ENCODE measurements at regions of chr10 and their contacts with region 1.

Region 1: DNA sequence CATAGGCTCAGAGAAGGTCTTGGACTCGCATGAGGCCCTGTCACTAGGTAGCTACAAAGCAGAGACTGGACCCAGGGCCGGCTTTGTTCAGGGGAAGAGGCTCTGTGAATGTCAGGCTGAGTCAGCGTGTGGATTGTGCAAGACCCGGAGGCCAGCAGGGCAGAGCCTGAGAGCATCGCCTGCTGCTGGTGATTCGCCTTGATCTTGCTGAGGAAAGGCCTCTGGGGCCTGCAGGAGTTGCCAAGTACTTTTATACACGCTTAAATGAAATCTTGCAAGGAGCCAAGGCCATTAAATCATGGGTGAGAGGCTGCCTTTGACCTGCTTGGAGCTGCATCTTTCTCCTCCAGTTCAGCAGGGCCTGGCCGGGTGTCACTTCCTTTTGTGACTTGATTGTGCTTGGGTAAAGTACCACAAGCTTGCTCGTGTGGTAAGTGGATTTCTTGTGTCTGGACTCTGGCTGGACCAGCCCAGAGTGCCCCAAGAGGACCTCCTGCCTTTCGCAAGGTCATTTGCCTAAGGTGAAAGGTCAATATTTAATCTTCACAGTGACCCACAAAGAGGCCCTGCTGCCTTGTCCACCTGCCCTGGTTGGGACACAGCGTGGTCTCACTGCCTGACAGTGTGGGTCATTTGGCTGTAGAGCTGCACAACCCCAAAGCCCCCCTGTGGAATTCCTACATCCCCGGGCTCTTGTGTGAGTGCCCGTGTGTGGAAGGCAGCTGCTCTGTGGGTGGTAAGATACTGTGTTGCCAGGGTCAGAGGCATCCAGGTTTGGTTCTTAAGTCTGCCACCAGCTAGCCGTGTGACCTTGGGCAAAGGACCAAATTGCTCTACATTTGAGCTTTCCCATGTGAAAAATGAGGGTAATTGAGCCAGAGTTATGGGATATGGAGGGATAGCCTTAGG is 38.6 kb upstream of the SH2D4B start:
- DNase-seq: peak; percentile 94
- H3K4me3 ChIP-seq: no peak overlapping the region
- H3K27ac ChIP-seq: peak overlapping the region; percentile 73
- H3K4me1 ChIP-seq: peaks cover 89% of the 10 kb centered on the region
- H3K27me3 ChIP-seq: no peaks in the 10 kb centered on the region
- CTCF ChIP-seq: peak in 1 of 2 donors; percentile 35

Region 2: DNA sequence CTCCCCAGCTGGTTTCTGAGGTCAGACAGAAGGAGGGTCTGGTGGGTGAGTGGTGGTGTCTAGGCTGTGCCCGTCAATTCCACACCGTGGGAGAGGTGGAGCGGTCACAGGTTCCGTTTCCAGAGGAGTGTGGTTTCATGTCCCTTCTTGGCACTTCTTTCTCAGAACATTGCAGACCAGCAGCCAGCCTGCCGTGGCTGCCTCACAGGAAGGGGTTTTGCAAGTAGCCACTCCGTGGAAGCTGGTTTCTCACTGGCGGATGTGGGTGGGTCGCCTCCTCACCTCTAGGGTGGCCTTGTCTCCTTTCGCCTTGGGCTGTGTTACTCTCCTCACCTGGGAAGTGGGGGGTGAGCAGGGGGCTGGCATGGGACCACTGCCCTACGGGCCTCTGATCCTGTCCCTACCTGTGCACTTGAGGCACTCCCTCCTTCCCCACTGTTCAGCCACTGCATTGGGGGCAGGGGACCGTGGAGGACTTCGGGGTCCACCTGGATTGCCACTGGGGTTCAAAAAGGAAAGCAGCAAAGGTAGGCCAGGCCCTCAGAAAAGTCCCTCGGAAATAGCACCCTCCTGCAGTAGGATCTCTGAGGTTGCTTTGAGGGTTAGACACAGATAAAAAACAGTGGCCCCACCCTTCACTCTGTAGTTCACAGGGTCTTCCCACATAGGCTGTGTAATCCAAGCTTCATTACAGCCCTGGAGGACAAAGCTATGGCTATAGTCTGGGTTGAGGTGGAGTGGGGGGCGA is 11.1 kb before region 1 on chr10:
- CTCF ChIA-PET with region 1: no interaction called
- dilution Hi-C with region 1: no loop called
- in situ Hi-C with region 1: no loop called
- intact Hi-C with region 1: loop called (anchors 1 kb)
- DNase-seq: no peak
- H3K4me3 ChIP-seq: no peak overlapping the region
- H3K27ac ChIP-seq: peak overlapping the region; percentile 3
- H3K4me1 ChIP-seq: peaks cover 37% of the 10 kb centered on the region
- H3K27me3 ChIP-seq: no peaks in the 10 kb centered on the region
- CTCF ChIP-seq: no peak

Region 3: DNA sequence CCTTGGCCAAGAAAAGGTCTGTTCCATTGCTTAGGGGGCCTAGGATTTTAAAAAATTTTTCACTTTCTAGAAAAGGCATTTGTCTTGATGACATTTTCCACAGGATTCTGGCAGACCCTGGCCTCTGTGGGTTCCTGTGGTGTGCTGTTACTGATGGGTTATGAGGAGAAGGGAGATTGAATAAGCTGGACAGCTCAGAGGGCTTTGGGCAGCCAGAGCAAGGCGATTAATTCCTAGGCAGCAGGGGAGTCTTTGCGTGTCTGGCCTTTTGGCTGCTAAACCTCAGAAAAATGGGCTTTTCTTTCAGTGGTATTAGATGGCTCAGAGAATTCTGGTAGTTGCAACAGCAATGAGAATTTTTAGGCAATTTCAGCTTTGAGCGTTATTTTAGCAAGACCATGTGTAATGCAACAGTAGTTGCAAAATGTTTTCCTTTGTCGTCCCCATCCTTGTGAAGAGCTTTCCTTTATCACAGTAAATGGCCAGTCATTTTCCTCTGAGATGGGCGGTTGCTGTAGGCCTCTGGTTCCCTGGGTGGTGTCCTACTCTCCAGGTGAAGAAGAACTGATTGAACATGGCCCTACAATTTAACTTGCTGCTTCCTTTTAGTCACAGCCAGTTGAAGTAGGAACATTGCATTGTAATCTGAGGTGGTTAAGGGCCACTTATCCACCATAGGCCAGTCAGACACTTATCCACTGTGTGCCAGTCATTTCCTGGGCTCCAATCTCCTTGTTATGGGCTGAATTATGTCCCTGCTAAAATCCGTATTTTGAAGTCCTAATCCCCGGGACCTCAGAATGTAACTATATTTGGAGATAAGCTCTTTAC is 81.8 kb after region 1 on chr10:
- CTCF ChIA-PET with region 1: no interaction called
- dilution Hi-C with region 1: no loop called
- in situ Hi-C with region 1: no loop called
- intact Hi-C with region 1: no loop called
- DNase-seq: no peak
- H3K4me3 ChIP-seq: no peak overlapping the region
- H3K27ac ChIP-seq: no peak overlapping the region
- H3K4me1 ChIP-seq: no peaks in the 10 kb centered on the region
- H3K27me3 ChIP-seq: no peaks in the 10 kb centered on the region
- CTCF ChIP-seq: no peak